Left colon (tissue), 2 donors: ENCODE measurements at regions of chr22 and their contacts with region 1.

Region 1: DNA sequence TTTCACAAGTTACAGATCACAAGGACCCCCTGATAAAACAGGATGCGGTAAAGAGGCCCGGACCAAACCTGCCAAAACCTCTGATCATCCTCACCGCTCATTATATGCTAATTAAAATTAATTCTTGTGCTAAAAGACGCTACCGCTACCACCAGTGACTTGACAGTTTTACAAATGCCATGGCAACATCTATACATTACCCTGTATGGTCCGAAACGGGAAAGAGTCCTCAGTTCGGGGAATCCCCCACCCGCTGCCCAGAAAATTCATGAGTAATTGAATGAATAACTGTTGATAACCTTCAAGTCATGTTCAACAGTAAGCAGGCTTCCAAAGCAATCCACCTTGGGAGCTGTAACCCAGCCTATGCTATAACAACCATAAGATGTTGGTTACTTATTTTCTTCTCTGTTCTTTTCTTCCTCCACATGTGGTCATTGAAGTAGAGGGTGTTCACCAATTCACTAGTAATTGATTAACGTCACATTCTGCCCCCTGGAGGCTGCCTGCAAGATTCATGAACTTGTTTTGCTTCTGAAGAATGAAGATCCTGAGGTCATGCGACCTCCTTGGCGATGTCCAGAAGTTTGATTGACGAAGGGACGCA is 20.6 kb downstream of the APOBEC3H start:
- DNase-seq: peak; percentile 56 to 82
- ATAC-seq: peak; percentile 86

Region 2: DNA sequence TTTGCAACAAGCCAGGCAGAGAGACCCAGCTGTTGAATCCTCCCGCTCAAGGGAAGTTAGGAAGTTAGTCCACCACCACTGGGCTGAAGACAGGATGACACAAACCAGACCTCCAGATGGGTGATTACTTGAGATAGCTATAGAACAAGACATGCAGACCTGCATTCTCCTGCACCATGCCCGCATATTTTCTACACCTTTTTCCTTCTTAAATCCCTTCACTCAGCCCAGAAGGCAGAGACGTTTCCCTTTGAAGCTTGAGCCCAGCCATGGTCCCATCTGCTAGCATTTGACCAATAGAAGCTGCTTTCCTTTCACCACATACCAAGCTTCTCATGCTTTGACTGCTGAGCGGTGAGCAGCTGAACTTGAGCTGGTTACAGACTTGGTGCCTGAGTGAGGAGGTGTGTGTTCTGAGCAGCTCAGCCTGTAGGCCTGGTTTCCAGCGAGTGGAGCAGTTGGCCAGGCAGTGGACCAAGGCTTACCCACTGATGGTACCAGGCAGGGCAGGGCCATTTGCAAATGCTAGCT is 216.5 kb before region 1 on chr22:
- intact Hi-C with region 1: no loop called
- DNase-seq: no peak
- ATAC-seq: no peak

Region 3: GRCh38 chr22:39007177-39007576 is 110.5 kb before region 1 on chr22:
- intact Hi-C with region 1: loop called in 1 of 2 experiments (anchors 5 kb)
- DNase-seq: no peak
- ATAC-seq: no peak

Region 4: DNA sequence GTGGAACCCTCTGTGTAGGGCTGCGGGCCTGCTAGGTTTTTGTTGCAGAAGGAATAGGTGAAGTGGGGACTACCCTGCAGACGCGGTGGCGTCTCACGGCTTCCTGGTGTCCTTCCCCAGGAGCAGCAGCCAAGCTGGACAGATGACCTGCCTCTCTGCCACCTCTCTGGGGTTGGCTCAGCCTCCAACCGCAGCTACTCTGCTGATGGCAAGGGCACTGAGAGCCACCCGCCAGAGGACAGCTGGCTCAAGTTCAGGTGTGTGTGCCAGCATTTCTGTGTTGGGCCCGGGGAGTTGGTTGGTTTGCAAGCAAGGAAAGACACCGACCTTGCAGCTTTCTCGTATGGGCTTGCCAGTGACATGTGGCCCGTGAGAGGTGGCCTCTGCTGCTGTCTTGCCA is 297.2 kb after region 1 on chr22:
- intact Hi-C with region 1: no loop called
- DNase-seq: no peak
- ATAC-seq: peak; percentile 23